Dendritic cell treated with granulocyte-macrophage colony-stimulating factor and Interleukin-4, amounts not matched to agents 40 ng/mL and 50 ng/mL, for 4 days (primary cell): ENCODE measurements at regions of chr17 and their contacts with region 1.

Region 1: GRCh38 chr17:70521821-70522256 is 352.5 kb downstream of the KCNJ2 start:
- H3K4me3 Mint-ChIP-seq: no peak overlapping the region
- H3K27ac Mint-ChIP-seq: peak overlapping the region; percentile 19
- H3K4me1 Mint-ChIP-seq: peaks cover 33% of the 10 kb centered on the region
- H3K27me3 Mint-ChIP-seq: no peaks in the 10 kb centered on the region

Region 2: DNA sequence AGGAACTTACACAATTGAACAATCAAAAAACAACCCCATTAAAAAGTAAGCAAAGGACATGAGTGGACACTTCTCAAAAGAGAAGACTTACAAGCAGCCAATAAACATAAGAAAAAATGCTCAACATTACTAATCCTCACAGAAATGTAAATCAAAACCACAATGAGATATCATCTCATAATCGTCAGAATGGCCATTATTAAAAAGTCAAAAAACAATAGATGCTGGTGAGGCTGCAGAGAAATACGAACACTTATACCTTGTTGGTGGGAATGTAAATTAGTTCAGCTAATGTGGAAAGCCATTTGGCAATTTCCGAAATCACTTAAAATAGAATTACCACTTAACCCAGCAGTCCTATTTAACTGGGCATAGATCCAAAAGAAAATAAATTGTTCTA is 748.8 kb before region 1 on chr17:
- intact Hi-C with region 1: no loop called
- H3K4me3 Mint-ChIP-seq: no peak overlapping the region
- H3K27ac Mint-ChIP-seq: no peak overlapping the region
- H3K4me1 Mint-ChIP-seq: peaks cover 11% of the 10 kb centered on the region
- H3K27me3 Mint-ChIP-seq: peaks cover 6% of the 10 kb centered on the region

Region 3: DNA sequence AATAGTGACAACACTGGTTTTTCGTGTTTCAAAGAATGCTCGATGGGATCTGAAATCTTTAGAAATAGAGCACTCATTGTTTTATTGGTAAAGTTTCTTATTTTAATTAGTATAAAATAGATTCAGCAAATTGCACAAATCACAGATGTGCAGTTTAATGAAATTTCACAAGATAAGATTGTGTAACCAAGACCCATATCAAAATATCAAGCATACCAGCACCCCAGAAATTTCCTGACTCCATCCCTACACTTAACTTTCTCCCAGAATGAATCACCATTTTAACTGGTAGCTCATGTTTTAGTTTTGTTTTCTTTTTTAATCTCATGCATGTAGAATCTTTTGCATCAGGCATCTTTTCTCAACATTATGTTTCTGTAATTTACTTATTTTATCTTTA is 166.7 kb before region 1 on chr17:
- intact Hi-C with region 1: no loop called
- H3K4me3 Mint-ChIP-seq: no peak overlapping the region
- H3K27ac Mint-ChIP-seq: no peak overlapping the region
- H3K4me1 Mint-ChIP-seq: peaks cover 12% of the 10 kb centered on the region
- H3K27me3 Mint-ChIP-seq: no peaks in the 10 kb centered on the region

Region 4: GRCh38 chr17:70535986-70536385 is 14.1 kb after region 1 on chr17:
- intact Hi-C with region 1: loop called (anchors 1 kb)
- H3K4me3 Mint-ChIP-seq: no peak overlapping the region
- H3K27ac Mint-ChIP-seq: no peak overlapping the region
- H3K4me1 Mint-ChIP-seq: peaks cover 14% of the 10 kb centered on the region
- H3K27me3 Mint-ChIP-seq: peaks cover 2% of the 10 kb centered on the region